ENCODE measurements at regions of chr6 and their contacts with region 1.

Region 1: GRCh38 chr6:12890171-12890790 is 173.7 kb downstream of the PHACTR1 start:
- DNase-seq: no peak
- H3K4me3 ChIP-seq: no peak overlapping the region
- H3K27ac ChIP-seq: no peak overlapping the region
- H3K4me1 ChIP-seq: peaks cover 19% of the 10 kb centered on the region
- H3K27me3 ChIP-seq: no peaks in the 10 kb centered on the region
- CTCF ChIP-seq: peak; percentile 50

Region 2: GRCh38 chr6:12637960-12638641 is 252.2 kb before region 1 on chr6:
- intact Hi-C with region 1: loop called (anchors 10 kb)
- DNase-seq: peak; percentile 28
- H3K4me3 ChIP-seq: no peak overlapping the region
- H3K27ac ChIP-seq: no peak overlapping the region
- H3K4me1 ChIP-seq: peaks cover 12% of the 10 kb centered on the region
- H3K27me3 ChIP-seq: no peaks in the 10 kb centered on the region
- CTCF ChIP-seq: peak; percentile 69

Region 3: DNA sequence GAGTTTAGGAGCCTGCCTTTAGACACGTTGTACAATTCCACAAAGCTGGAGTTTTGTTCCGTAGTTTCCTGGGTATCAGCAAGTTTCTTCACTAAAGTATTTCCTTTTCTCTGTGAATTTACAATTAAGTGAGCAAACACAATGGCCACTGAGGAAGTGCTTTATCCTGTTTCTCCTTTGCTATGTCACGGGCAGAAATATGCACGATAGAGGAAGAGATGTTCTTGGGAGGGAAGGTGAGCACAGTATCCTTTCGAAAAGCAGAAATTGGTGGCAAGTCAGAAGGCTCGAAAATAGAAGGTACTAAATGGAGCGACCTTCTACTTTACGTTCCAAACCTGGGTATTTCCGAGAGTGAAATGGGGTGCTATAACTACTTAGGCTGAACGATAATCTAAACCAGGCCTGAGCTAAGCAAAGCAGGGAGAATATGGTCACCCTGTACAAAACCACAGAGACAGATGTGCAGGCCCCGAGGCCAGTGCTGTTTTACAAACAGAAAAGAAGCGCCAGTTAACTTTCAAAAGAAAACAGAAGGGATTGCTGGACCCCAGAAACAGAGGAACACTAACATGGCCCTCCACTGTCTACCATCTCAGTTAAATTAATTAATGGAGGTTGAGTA is 178.4 kb after region 1 on chr6:
- intact Hi-C with region 1: no loop called
- DNase-seq: no peak
- H3K4me3 ChIP-seq: no peak overlapping the region
- H3K27ac ChIP-seq: peak overlapping the region; percentile 76
- H3K4me1 ChIP-seq: peaks cover 76% of the 10 kb centered on the region
- H3K27me3 ChIP-seq: no peaks in the 10 kb centered on the region
- CTCF ChIP-seq: no peak

Measured in left ventricle myocardium inferior (tissue), 1 donor.